ENCODE measurements at regions of chr18 and their contacts with region 1.

Region 1: GRCh38 chr18:31679133-31679731 is 5.1 kb downstream of the B4GALT6 start:
- DNase-seq: no peak
- H3K4me3 ChIP-seq: peak overlapping the region in 1 of 7 experiments; percentile 19
- H3K27ac ChIP-seq: peak overlapping the region in 1 of 2 experiments; percentile 16
- H3K4me1 ChIP-seq: peaks cover 16 to 90% (median 64%) of the 10 kb centered on the region in 4 experiments
- H3K27me3 ChIP-seq: no peaks in the 10 kb centered on the region

Region 2: DNA sequence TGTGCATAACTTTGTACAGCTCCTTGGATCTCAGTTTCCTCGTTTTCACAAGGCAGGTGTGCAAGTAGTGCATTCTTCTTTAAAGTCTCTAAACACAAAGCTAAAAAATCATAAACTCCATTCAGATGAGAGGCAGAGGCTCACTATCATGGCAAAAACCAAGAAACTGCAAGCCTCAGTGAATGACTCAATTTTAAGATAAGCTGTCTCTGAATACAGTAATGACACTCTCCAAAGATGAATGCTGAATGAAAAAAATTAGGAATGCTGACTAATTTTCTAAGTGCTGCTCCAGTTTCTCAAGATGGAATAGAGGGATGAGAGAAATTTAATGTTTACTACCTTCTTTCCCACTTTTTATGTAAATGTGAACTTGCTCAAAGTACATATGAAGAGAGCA is 12.0 kb before region 1 on chr18:
- CTCF ChIA-PET with region 1: interaction called, 31 read pairs
- POLR2A ChIA-PET with region 1: no interaction called
- DNase-seq: no peak
- H3K4me3 ChIP-seq: no peak overlapping the region
- H3K27ac ChIP-seq: no peak overlapping the region
- H3K4me1 ChIP-seq: peaks cover 3 to 20% (median 5%) of the 10 kb centered on the region in 4 experiments
- H3K27me3 ChIP-seq: no peaks in the 10 kb centered on the region

Measured in common myeloid progenitor, CD34-positive (primary cell).